ENCODE measurements at regions of chr18 and their contacts with region 1.

Region 1: DNA sequence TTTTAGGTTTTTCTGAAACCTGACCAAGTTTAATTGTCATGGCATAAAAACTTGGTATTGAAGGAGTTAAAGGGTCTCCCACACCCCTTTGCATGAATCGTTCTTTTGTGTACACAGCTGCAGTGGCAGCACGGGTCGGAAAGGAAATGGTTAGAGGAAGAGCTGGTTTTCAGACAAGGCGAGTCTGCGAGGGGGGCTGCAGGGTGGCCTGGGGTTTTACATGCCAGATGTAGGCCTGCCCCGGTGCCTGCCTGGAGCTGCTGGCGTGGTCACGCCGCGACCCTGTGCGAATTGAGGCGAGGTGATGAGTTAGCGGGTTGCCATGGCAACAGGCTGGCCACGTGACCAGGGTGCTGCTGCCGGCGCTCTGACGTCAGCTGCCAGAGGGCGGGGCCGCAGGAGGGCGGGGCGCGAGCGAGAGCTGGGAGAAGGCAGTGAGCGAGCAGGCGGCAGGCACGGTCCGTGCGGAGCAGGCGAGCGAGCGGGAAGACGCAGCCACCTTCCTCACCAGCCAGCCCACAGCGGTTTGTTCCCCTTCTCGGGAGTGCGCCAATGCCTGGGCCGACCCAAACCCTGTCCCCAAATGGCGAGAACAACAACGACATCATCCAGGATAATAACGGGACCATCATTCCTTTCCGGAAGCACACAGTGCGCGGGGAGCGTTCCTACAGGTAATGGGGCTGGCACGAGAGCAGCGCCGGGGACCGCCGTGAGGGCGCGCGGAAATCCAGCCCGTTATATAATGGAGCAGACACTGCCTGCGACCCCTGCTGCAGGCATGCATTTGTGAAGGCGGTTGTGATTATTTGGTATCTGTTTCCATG is at the start of gene MAPRE2:
- DNase-seq: peak; percentile 97 to 100 (median 99)
- ATAC-seq: peak; percentile 91
- H3K4me3 ChIP-seq: peak within 1 kb of the TSS; percentile 80
- H3K4me3 Mint-ChIP-seq: peak within 1 kb of the TSS; percentile 86 to 98 (median 97)
- H3K27ac ChIP-seq: peak within 1 kb of the TSS; percentile 95
- H3K27ac Mint-ChIP-seq: peak within 1 kb of the TSS; percentile 94 to 100 (median 98)
- H3K4me1 ChIP-seq: peaks cover 29 to 41% of the 10 kb centered on the region in 2 donors
- H3K4me1 Mint-ChIP-seq: peaks cover 31 to 73% (median 48%) of the 10 kb centered on the region in 7 donors
- H3K27me3 ChIP-seq: no peaks in the 10 kb centered on the region
- H3K27me3 Mint-ChIP-seq: peaks cover 0 to 3% (median 0%) of the 10 kb centered on the region in 5 donors
- total RNA-seq, gene MAPRE2: 44.7 to 84.4 (median 63.5) TPM

Region 2: DNA sequence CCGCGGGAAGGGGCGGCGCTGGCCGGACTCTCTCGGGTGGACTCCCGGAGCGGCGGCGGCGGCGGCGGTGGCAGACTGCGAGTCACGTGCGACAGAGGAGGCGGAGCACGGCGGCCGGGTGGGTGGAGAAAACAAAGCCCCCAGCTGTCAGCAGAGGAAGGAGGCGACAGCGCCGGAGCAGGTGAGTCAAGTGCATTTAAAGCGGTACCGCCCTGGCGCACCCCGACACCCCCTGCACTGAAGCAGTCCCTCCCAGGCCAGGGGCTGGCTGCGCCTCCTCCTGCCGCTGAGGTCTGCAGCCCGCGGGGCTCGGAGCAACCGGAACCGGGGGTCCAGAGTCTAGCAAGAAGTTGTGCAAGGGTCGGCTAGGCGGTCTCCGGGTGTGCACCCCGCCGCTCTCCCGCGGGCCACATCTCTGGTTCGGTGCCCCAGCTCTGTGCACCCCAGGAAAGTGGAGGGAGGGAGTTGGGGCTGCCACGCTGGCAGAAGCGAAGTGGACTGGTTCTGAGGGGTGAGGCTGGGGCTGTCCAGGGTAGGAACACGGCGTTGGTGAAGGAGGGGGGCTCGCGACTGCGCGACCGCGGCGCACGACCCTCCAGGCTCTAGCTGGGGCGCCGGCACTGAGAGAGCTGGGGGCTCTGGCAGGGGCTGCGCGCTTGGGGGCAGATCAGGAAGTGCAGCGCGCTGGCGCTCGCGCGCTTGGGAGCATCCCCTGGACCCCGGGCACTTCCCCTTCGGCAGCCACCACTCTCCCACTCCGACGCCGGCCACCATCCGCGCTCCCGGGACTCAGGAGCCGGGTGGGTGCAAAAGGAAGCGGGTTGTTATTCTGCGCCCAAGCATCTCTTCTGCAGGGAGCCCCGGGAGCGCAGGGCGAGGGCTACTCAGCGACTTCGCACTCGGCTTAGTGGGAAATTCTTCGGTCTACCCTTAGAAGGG is 64.0 kb before region 1 on chr18:
- CTCF ChIA-PET with region 1: no interaction called
- POLR2A ChIA-PET with region 1: interaction called, 4 read pairs
- intact Hi-C with region 1: loop called (anchors 1 to 5 kb)
- DNase-seq: peak; percentile 60 to 78 (median 72)
- ATAC-seq: peak; percentile 84
- H3K4me3 ChIP-seq: peak overlapping the region; percentile 74
- H3K4me3 Mint-ChIP-seq: peak overlapping the region; percentile 89 to 99 (median 94)
- H3K27ac ChIP-seq: peak overlapping the region; percentile 54
- H3K27ac Mint-ChIP-seq: peak overlapping the region in 6 of 9 donors; percentile 24 to 72 (median 39)
- H3K4me1 ChIP-seq: no peaks in the 10 kb centered on the region
- H3K4me1 Mint-ChIP-seq: peaks cover 18 to 37% (median 24%) of the 10 kb centered on the region in 7 donors
- H3K27me3 ChIP-seq: peaks cover 0 to 3% of the 10 kb centered on the region in 2 donors
- H3K27me3 Mint-ChIP-seq: peaks cover 0 to 66% (median 0%) of the 10 kb centered on the region in 5 donors

Region 3: DNA sequence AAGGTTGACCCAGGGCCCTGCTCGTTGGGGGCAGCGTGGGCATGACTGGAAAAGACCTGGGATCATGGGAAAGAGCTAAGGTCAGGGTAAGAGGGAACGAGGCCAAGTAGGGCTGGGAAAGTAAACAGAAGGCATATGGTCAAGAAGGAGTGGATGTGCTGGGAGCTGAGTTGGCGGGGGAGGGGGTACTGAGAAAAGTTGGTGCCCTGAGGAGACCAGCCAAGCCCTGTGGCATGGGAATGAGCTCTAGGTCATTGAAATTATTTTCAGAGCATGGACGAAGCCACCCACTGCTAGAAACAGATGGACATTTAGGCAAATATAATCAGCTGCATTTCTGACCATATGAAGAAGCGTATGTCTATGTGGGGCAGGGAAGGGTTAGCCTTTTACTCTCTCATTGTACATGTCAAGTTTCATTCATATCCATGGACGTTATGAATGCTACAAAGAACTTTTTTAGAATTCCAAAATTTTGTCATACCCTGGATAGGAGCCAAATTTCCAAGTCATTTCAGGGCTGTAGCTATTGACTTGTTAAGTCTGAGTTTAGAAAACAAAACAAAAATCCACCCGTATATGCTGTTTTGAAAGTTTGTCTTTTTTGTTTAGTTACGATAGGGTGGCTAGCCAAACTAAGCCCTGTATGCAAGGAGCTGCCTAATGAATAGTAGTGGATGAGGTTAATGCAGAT is 19.1 kb after region 1 on chr18:
- CTCF ChIA-PET with region 1: no interaction called
- POLR2A ChIA-PET with region 1: interaction called, 3 read pairs
- intact Hi-C with region 1: loop called in 1 of 2 experiments (anchors 2 kb)
- DNase-seq: no peak
- ATAC-seq: no peak
- H3K4me3 ChIP-seq: no peak overlapping the region
- H3K4me3 Mint-ChIP-seq: peak overlapping the region in 2 of 10 donors; percentile 21 to 27
- H3K27ac ChIP-seq: no peak overlapping the region
- H3K27ac Mint-ChIP-seq: peak overlapping the region in 5 of 9 donors; percentile 5 to 83 (median 41)
- H3K4me1 ChIP-seq: no peaks in the 10 kb centered on the region
- H3K4me1 Mint-ChIP-seq: peaks cover 0 to 95% (median 86%) of the 10 kb centered on the region in 7 donors
- H3K27me3 ChIP-seq: no peaks in the 10 kb centered on the region
- H3K27me3 Mint-ChIP-seq: no peaks in the 10 kb centered on the region

Region 4: DNA sequence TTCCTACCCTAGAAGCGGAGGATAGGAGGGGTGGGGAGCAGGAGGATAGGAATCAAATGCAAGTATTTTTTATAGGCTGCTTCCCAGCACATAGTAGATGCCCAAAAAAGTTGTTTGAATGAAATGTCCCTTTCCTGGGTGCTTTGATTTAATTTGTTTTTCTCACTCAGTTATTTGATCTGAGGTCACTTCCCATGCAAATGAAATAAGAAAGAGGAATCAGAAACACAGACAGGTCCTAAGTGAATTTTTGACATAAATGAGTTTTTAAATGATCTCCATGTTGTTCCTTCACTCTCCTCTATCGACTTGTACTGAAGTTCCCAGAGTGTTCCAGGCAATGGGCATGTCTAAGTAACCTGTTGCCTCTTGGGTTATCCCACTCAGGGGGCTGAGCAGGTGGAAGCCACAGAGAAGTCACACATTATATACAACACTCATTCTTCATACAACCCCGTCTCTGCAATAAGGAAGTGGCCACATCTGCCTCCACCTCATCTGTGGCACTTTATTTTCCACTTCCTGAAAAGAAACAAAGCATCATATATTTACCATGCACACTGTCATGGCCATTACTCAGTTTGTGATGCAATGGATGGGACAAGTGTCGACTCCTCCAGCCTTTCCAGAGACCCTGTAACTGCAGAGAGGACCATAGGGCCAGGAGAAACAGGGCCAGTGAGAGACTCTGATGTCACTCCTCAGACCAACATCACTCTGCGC is 117.7 kb after region 1 on chr18:
- CTCF ChIA-PET with region 1: no interaction called
- POLR2A ChIA-PET with region 1: no interaction called
- intact Hi-C with region 1: loop called in 1 of 2 experiments (anchors 5 kb)
- DNase-seq: peak in 3 of 9 donors; percentile 9 to 27 (median 19)
- ATAC-seq: peak; percentile 88
- H3K4me3 ChIP-seq: no peak overlapping the region
- H3K4me3 Mint-ChIP-seq: peak overlapping the region in 3 of 10 donors; percentile 5 to 65 (median 48)
- H3K27ac ChIP-seq: no peak overlapping the region
- H3K27ac Mint-ChIP-seq: peak overlapping the region in 4 of 9 donors; percentile 11 to 90 (median 66)
- H3K4me1 ChIP-seq: peaks cover 0 to 6% of the 10 kb centered on the region in 2 donors
- H3K4me1 Mint-ChIP-seq: peaks cover 16 to 36% (median 24%) of the 10 kb centered on the region in 7 donors
- H3K27me3 ChIP-seq: no peaks in the 10 kb centered on the region
- H3K27me3 Mint-ChIP-seq: peaks cover 0 to 5% (median 0%) of the 10 kb centered on the region in 5 donors

Region 5: GRCh38 chr18:35343936-35344735 is 302.9 kb after region 1 on chr18 and contains the start of gene ZNF24:
- CTCF ChIA-PET with region 1: no interaction called
- POLR2A ChIA-PET with region 1: interaction called, 6 read pairs
- intact Hi-C with region 1: loop called (anchors 1 kb)
- DNase-seq: peak; percentile 83 to 92 (median 87)
- ATAC-seq: peak; percentile 92
- H3K4me3 ChIP-seq: peak within 1 kb of the TSS; percentile 96
- H3K4me3 Mint-ChIP-seq: peak within 1 kb of the TSS; percentile 93 to 100 (median 98)
- H3K27ac ChIP-seq: peak within 1 kb of the TSS; percentile 100
- H3K27ac Mint-ChIP-seq: peak within 1 kb of the TSS; percentile 91 to 98 (median 98)
- H3K4me1 ChIP-seq: peaks cover 23 to 25% of the 10 kb centered on the region in 2 donors
- H3K4me1 Mint-ChIP-seq: peaks cover 30 to 56% (median 45%) of the 10 kb centered on the region in 7 donors
- H3K27me3 ChIP-seq: no peaks in the 10 kb centered on the region
- H3K27me3 Mint-ChIP-seq: no peaks in the 10 kb centered on the region
- total RNA-seq, gene ZNF24: 55.6 to 98.1 (median 80.8) TPM

Region 6: GRCh38 chr18:35580701-35581539 is 539.7 kb after region 1 on chr18:
- CTCF ChIA-PET with region 1: no interaction called
- POLR2A ChIA-PET with region 1: no interaction called
- intact Hi-C with region 1: loop called in 1 of 2 experiments (anchors 5 kb)
- DNase-seq: peak; percentile 54 to 70 (median 63)
- ATAC-seq: peak; percentile 84
- H3K4me3 ChIP-seq: peak overlapping the region; percentile 61
- H3K4me3 Mint-ChIP-seq: peak overlapping the region; percentile 60 to 80 (median 72)
- H3K27ac ChIP-seq: peak overlapping the region; percentile 77
- H3K27ac Mint-ChIP-seq: peak overlapping the region in 5 of 9 donors; percentile 37 to 80 (median 63)
- H3K4me1 ChIP-seq: peaks cover 11% of the 10 kb centered on the region in 2 donors
- H3K4me1 Mint-ChIP-seq: peaks cover 13 to 39% (median 28%) of the 10 kb centered on the region in 7 donors
- H3K27me3 ChIP-seq: no peaks in the 10 kb centered on the region
- H3K27me3 Mint-ChIP-seq: peaks cover 0 to 18% (median 7%) of the 10 kb centered on the region in 5 donors

Region 7: DNA sequence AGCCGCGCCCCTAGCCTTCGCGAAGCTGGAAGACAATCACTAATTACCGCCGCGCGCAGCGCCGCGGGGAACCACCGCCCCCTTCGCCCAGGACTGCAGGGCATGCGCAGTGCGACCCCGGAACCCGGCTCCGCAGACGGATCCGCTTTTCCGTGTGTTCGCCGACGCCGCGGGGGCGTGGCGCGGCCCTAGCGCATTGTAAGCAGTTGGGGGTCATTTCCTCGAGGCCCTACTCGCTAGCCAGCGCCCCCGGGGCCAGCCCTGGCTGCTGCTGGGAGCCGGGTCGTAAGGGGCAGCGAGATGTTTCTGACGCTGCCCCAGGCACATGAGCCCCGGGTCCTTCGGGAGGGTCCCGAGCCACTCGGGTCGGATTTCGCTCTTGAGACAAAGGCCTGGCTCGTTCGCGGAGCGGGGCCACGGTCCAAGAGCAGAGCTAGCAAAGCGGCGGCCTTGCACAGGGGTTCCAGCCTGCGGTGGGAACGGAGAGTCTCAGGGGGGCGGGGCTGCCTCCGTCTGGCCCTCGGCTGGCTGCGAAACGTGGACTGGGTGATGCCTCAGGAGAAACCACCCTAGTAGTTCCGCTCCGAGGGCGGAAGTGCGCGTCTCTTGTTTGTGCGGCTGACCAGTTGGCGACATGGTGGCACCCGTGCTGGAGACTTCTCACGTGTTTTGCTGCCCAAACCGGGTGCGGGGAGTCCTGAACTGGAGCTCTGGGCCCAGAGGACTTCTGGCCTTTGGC is 1088.3 kb after region 1 on chr18 and contains the starts of genes ELP2 and SLC39A6:
- CTCF ChIA-PET with region 1: no interaction called
- POLR2A ChIA-PET with region 1: no interaction called
- intact Hi-C with region 1: loop called (anchors 1 kb)
- DNase-seq: peak; percentile 89 to 98 (median 95)
- ATAC-seq: peak; percentile 94
- H3K4me3 ChIP-seq: peak within 1 kb of the TSS; percentile 99
- H3K4me3 Mint-ChIP-seq: peak within 1 kb of the TSS; percentile 87 to 98 (median 95)
- H3K27ac ChIP-seq: peak within 1 kb of the TSS; percentile 96
- H3K27ac Mint-ChIP-seq: peak within 1 kb of the TSS; percentile 93 to 99 (median 98)
- H3K4me1 ChIP-seq: peaks cover 33 to 35% of the 10 kb centered on the region in 2 donors
- H3K4me1 Mint-ChIP-seq: peaks cover 39 to 81% (median 61%) of the 10 kb centered on the region in 7 donors
- H3K27me3 ChIP-seq: no peaks in the 10 kb centered on the region
- H3K27me3 Mint-ChIP-seq: no peaks in the 10 kb centered on the region
- total RNA-seq, gene ELP2: 79.3 to 177 (median 150) TPM
- total RNA-seq, gene SLC39A6: 12.1 to 25.2 (median 16.6) TPM